Activated T-helper 2 cell treated with anti-CD3 and anti-CD28 coated beads, Interferon-gamma antibody, Interleukin-2, Interleukin-4, amounts not matched to agents 10 μg/mL and 5 μg/mL and 100 μg/mL, durations not matched to agents 14 hours and 24 hours and 36 hours (primary cell): ENCODE measurements at regions of chr4 and their contacts with region 1.

Region 1: GRCh38 chr4:10722957-10723356 is 38.4 kb upstream of the CLNK start:
- DNase-seq: no peak
- H3K4me3 Mint-ChIP-seq: peak overlapping the region; percentile 58
- H3K27ac Mint-ChIP-seq: peak overlapping the region; percentile 69
- H3K4me1 Mint-ChIP-seq: peaks cover 65% of the 10 kb centered on the region
- H3K27me3 Mint-ChIP-seq: no peaks in the 10 kb centered on the region

Region 2: DNA sequence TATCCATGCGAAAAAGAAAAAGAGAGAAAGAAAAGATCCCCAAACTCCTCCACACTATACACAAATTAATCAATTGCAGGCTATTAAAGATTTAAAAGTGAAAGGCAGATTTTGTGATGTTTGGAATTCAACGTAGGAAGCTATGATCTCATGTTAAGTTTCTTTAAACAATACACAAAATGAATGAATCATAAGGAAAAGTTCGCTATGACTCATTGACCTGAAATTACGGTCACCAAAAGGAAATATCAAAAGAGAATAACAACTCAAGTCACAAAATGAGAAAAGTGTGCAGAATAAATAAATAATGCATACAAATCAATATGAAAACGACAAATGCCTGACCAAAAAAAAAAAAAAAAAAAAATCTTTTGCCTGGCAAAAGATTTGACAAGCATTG is 67.0 kb before region 1 on chr4:
- intact Hi-C with region 1: loop called (anchors 2 kb)
- DNase-seq: no peak
- H3K4me3 Mint-ChIP-seq: peak overlapping the region; percentile 55
- H3K27ac Mint-ChIP-seq: peak overlapping the region; percentile 90
- H3K4me1 Mint-ChIP-seq: peaks cover 42% of the 10 kb centered on the region
- H3K27me3 Mint-ChIP-seq: no peaks in the 10 kb centered on the region

Region 3: DNA sequence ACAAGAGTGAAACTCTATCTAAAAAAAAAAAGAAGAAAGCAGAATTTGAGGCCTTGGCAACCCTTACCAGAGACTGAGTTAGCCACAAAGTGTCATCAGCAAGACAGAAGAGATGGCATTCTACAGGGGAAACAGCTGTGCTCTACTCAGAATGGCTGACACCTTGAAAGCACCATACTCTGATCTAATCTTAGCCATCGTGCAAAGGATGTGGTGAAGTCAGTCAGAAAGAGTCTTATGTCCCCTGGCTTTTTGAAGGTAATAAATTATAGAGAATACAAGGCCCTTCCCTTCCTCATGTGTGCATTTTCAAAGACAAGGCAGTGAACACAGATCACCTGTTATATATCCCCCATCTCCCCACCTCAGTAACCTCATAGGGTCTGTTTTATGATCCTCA is 51.6 kb before region 1 on chr4:
- intact Hi-C with region 1: no loop called
- DNase-seq: peak; percentile 59
- H3K4me3 Mint-ChIP-seq: peak overlapping the region; percentile 1
- H3K27ac Mint-ChIP-seq: peak overlapping the region; percentile 77
- H3K4me1 Mint-ChIP-seq: peaks cover 47% of the 10 kb centered on the region
- H3K27me3 Mint-ChIP-seq: no peaks in the 10 kb centered on the region

Region 4: GRCh38 chr4:10737337-10737736 is 14.4 kb after region 1 on chr4:
- intact Hi-C with region 1: loop called (anchors 1 kb)
- DNase-seq: no peak
- H3K4me3 Mint-ChIP-seq: peak overlapping the region; percentile 64
- H3K27ac Mint-ChIP-seq: peak overlapping the region; percentile 86
- H3K4me1 Mint-ChIP-seq: peaks cover 65% of the 10 kb centered on the region
- H3K27me3 Mint-ChIP-seq: no peaks in the 10 kb centered on the region

Region 5: DNA sequence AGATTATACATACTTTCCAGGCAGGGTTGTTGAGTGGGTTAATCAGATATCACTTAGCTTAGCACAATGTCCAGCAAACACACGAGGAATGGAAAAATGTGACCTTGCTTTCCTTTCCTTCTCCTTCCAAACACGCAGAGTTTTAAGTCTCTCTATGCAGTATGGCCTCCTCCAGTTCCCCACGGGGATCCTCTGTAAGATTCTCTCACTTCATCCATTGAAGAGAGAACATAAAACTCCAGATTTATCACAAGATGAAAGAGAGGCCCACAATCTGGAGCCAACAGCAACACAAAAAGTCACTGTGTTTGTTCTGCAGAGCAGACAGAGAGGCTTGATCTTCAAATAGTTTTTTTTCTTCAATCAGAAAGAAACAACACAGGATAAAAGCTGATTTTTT is 298.4 kb after region 1 on chr4:
- intact Hi-C with region 1: no loop called
- DNase-seq: no peak
- H3K4me3 Mint-ChIP-seq: no peak overlapping the region
- H3K27ac Mint-ChIP-seq: no peak overlapping the region
- H3K4me1 Mint-ChIP-seq: no peaks in the 10 kb centered on the region
- H3K27me3 Mint-ChIP-seq: no peaks in the 10 kb centered on the region

Region 6: GRCh38 chr4:11480683-11481082 is 757.7 kb after region 1 on chr4:
- intact Hi-C with region 1: loop called (anchors 5 kb)
- DNase-seq: no peak
- H3K4me3 Mint-ChIP-seq: no peak overlapping the region
- H3K27ac Mint-ChIP-seq: no peak overlapping the region
- H3K4me1 Mint-ChIP-seq: peaks cover 14% of the 10 kb centered on the region
- H3K27me3 Mint-ChIP-seq: peaks cover 2% of the 10 kb centered on the region